Vagina (tissue), 2 donors: ENCODE measurements at regions of chr7 and their contacts with region 1.

Region 1: DNA sequence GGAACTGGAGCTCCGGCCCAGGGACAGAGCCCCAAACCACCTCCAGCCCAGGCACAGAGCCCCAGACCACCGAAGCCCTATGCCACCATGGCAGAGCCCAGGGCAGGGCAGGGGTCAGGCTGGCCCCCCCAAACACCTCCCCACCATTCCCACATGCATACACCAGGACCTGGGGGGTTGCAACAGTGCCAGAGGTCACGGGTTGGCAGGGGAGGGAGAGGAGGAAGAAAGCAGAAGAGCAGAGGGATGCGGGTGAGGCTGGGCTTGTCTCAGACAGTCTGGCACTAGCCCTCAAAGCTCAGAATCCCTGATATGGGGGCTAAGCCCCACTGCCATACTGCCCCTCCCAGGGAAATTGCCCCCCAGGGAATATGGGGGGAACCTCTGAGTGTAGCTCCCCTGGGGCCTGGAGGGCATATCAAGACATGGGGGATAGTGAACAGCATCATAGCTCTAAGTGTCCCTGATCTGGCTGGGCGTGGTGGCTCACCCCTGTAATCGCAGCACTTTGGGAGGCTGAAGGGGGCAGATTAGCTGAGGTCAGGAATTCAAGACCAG is 5.1 kb downstream of the HSPB1 start:
- DNase-seq: no peak
- H3K4me3 ChIP-seq: no peak overlapping the region
- H3K27ac ChIP-seq: peak overlapping the region; percentile 100
- H3K4me1 ChIP-seq: peaks cover 46% of the 10 kb centered on the region
- H3K27me3 ChIP-seq: no peaks in the 10 kb centered on the region
- CTCF ChIP-seq: no peak
- POLR2A ChIP-seq: no peak

Region 2: DNA sequence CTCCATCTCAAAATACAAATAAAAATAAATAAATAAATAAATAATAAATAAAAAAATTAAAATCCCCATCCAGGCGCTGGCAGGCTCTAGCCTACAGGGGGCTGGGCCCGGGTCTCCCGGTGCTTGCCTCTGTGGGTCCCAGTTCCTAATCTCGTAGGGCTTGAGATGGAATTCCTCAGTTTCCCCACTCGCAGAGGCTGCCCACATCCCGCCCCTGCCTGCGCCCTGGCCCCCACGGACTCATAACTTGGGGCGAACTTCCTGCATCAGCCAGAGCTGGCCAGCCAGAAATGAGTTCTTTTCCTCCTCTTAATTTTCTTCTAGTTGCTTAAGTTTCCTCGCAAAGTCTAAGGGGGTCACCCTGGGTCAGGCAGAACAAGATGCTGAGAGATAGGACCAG is 127.8 kb before region 1 on chr7:
- intact Hi-C with region 1: loop called (anchors 2 kb)
- DNase-seq: no peak
- H3K4me3 ChIP-seq: no peak overlapping the region
- H3K27ac ChIP-seq: no peak overlapping the region
- H3K4me1 ChIP-seq: no peaks in the 10 kb centered on the region
- H3K27me3 ChIP-seq: no peaks in the 10 kb centered on the region
- CTCF ChIP-seq: no peak
- POLR2A ChIP-seq: no peak